GM12878 (cell line): ENCODE measurements at regions of chr11 and their contacts with region 1.

Region 1: DNA sequence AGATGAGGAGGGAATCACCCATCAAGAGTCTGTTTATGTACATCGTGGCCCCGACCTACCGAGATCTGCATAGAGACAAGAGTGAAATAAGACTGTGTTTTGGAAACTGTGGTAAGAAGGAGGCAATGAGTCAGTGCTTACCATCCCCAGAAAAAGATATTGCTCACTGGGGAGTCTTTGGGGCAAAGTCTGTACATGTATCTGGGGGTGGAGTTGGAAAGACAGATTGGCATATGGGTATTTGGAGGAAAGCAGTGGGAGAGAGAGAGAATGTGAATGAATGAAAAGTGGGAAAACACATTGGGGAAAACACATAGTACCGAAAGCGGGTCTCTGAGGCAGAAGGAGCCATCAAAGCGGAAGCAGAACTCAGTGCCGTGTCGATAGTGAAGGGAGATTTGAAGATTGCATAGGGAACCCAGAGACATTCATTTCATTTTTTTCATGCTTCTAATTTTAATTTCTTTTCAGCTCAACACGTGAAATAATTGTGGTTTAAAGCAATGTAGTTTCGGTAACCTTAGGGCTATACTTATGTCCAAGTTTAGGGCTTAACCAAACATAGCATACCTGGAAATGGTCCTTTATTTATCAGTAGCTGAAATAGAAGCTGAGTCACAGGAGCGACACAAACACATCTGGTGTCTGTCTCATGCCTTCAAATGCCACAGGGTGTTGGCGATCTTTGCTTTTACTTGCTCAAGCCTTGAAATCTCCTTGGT is 98.6 kb upstream of the CD44 start:
- DNase-seq: peak; percentile 84
- ATAC-seq: peak; percentile 88
- H3K4me3 ChIP-seq: peak overlapping the region; percentile 6; the same call in 1 of the 2 replicates
- H3K27ac ChIP-seq: peak overlapping the region; percentile 71
- H3K4me1 ChIP-seq: peaks cover 31% of the 10 kb centered on the region
- H3K27me3 ChIP-seq: no peaks in the 10 kb centered on the region
- CTCF ChIP-seq: no peak
- EP300 ChIP-seq: peak; percentile 63 to 93; a peak in 3 of 4 replicates
- POLR2A ChIP-seq: no peak
- RAD21 ChIP-seq: peak; percentile 6; the same call in 1 of the 2 replicates

Region 2: GRCh38 chr11:34997952-34998528 is 42.3 kb before region 1 on chr11:
- CTCF ChIA-PET with region 1: interaction called, 4 read pairs
- POLR2A ChIA-PET with region 1: no interaction called
- RAD21 ChIA-PET with region 1: interaction called, 8 read pairs
- SMC1A ChIA-PET with region 1: interaction called, 10 read pairs
- in situ Hi-C with region 1: no loop called
- intact Hi-C with region 1: no loop called
- DNase-seq: no peak
- ATAC-seq: peak; percentile 74
- H3K4me3 ChIP-seq: no peak overlapping the region
- H3K27ac ChIP-seq: no peak overlapping the region
- H3K4me1 ChIP-seq: peaks cover 8% of the 10 kb centered on the region; the same call in 1 of the 2 replicates
- H3K27me3 ChIP-seq: no peaks in the 10 kb centered on the region
- CTCF ChIP-seq: peak; percentile 24 to 62 (median 41); a peak in 5 of 6 replicates
- EP300 ChIP-seq: no peak
- POLR2A ChIP-seq: no peak
- RAD21 ChIP-seq: peak; percentile 62

Region 3: GRCh38 chr11:35050541-35050995 is 10.2 kb after region 1 on chr11:
- CTCF ChIA-PET with region 1: interaction called, 4 read pairs
- POLR2A ChIA-PET with region 1: no interaction called
- RAD21 ChIA-PET with region 1: interaction called, 7 read pairs
- SMC1A ChIA-PET with region 1: interaction called, 27 read pairs
- in situ Hi-C with region 1: no loop called
- intact Hi-C with region 1: no loop called
- DNase-seq: no peak
- ATAC-seq: peak; percentile 18; the same call in 2 of the 3 replicates
- H3K4me3 ChIP-seq: no peak overlapping the region
- H3K27ac ChIP-seq: peak overlapping the region; percentile 61
- H3K4me1 ChIP-seq: peaks cover 14% of the 10 kb centered on the region
- H3K27me3 ChIP-seq: no peaks in the 10 kb centered on the region
- CTCF ChIP-seq: no peak
- EP300 ChIP-seq: no peak
- POLR2A ChIP-seq: no peak
- RAD21 ChIP-seq: no peak

Region 4: DNA sequence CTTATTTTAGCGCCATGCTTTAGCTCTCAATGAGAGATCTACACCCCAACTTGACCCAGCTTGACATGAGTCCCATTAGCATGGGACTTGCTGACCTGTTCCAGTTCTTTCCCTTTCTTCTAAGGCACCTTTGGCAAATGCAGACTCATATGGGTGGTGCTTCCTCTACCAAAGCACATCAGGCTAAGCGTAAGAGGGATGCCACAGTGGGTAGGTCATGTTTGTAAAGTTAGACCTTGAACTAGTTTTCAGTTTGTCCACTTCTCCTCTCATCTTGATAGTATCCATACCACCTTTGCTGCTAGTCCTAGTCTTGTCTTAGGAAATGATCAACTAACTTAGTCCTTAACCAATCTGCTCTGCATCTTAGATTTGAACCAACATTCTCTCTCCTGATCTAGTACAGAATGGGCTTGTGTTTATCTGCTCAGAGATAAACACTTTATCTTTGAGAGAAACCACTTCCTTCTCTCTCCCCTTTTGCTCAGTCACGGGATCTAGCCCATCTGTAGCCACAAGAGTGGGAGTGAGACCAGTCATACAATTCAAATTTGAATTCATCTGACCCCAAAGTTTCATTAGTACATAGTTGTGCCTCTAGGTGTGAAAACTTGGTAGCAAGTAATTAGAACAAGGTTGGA is 26.5 kb after region 1 on chr11:
- CTCF ChIA-PET with region 1: interaction called, 5 read pairs
- POLR2A ChIA-PET with region 1: interaction called, 4 read pairs
- RAD21 ChIA-PET with region 1: interaction called, 6 read pairs
- SMC1A ChIA-PET with region 1: interaction called, 14 read pairs
- in situ Hi-C with region 1: no loop called
- intact Hi-C with region 1: no loop called
- DNase-seq: no peak
- ATAC-seq: peak; percentile 92
- H3K4me3 ChIP-seq: no peak overlapping the region
- H3K27ac ChIP-seq: no peak overlapping the region
- H3K4me1 ChIP-seq: peaks cover 14% of the 10 kb centered on the region
- H3K27me3 ChIP-seq: no peaks in the 10 kb centered on the region
- CTCF ChIP-seq: no peak
- EP300 ChIP-seq: peak; percentile 74 to 76
- POLR2A ChIP-seq: no peak
- RAD21 ChIP-seq: no peak

Region 5: DNA sequence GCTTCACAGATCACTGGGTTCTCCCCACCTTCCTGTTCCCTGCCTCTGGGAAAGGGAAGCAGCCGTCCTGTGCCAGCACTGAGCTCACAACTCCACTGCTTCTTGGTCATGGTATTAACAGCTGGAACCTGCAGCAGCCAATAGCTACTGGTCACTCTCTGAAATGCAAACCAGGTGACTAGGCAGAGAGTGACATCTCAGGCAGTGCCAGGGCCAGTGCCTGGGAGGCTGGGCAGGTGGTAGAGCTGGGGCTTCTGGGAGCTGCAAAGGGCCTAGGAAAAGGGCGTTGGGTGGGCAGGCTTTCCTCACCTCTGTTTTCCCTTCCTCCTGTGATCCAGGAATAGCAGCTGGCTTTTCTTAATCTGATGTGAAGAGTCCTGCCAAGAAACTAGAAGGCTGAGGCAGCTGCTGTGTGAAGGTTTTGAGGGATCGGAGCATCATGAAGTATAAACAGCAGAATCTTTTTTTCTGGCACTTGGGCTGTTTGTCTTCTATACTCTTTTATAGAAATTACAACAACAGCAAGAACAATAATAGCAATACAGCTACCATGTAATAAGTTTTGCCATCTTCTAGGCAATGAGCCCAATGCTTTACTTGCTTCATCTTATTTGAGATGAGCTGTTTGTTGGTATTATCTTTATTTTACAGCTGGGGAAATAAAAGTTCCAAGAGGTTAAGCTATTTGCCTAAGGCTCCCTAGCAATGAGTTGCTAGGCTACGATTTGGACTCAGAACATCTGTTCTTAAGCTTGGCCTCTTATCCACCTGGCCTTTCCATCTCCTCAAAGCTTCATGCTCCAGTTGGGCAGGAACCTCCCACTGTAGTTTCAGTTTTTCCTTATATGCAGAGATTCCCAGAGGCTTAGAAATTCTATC is 76.6 kb after region 1 on chr11:
- CTCF ChIA-PET with region 1: no interaction called
- POLR2A ChIA-PET with region 1: no interaction called
- RAD21 ChIA-PET with region 1: interaction called, 4 read pairs
- SMC1A ChIA-PET with region 1: interaction called, 6 read pairs
- in situ Hi-C with region 1: no loop called
- intact Hi-C with region 1: loop called (anchors 2 kb)
- DNase-seq: no peak
- ATAC-seq: no peak
- H3K4me3 ChIP-seq: no peak overlapping the region
- H3K27ac ChIP-seq: no peak overlapping the region
- H3K4me1 ChIP-seq: peaks cover 53% of the 10 kb centered on the region
- H3K27me3 ChIP-seq: no peaks in the 10 kb centered on the region
- CTCF ChIP-seq: no peak
- EP300 ChIP-seq: no peak
- POLR2A ChIP-seq: no peak
- RAD21 ChIP-seq: no peak

Region 6: DNA sequence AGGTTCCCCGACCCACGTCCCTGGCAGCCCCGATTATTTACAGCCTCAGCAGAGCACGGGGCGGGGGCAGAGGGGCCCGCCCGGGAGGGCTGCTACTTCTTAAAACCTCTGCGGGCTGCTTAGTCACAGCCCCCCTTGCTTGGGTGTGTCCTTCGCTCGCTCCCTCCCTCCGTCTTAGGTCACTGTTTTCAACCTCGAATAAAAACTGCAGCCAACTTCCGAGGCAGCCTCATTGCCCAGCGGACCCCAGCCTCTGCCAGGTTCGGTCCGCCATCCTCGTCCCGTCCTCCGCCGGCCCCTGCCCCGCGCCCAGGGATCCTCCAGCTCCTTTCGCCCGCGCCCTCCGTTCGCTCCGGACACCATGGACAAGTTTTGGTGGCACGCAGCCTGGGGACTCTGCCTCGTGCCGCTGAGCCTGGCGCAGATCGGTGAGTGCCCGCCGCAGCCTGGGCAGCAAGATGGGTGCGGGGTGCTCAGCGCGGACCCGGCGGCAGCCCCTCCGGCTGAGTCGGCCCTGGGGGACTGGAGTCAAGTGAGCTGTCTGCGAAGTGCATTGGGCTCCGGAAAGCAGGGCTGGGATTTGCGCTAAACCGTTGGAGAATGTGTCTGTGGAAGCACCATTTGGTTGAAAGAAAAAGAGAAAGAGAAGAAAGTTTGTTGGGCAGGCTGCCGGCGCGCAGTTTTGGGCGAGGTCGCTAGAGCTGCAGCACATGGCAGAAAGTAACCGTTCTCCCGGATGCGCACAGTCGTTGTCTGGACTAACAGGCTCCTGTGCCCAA is 98.8 kb after region 1 on chr11 and contains the start of gene CD44:
- CTCF ChIA-PET with region 1: interaction called, 6 read pairs
- POLR2A ChIA-PET with region 1: interaction called, 4 read pairs
- RAD21 ChIA-PET with region 1: interaction called, 8 read pairs
- SMC1A ChIA-PET with region 1: interaction called, 10 read pairs
- in situ Hi-C with region 1: no loop called
- intact Hi-C with region 1: loop called (anchors 1 kb)
- DNase-seq: no peak
- ATAC-seq: peak; percentile 54
- H3K4me3 ChIP-seq: peak within 1 kb of the TSS; percentile 88
- H3K27ac ChIP-seq: peak within 1 kb of the TSS; percentile 68
- H3K4me1 ChIP-seq: peaks cover 34% of the 10 kb centered on the region
- H3K27me3 ChIP-seq: no peaks in the 10 kb centered on the region
- CTCF ChIP-seq: no peak
- EP300 ChIP-seq: no peak
- POLR2A ChIP-seq: peak; percentile 99
- RAD21 ChIP-seq: no peak
- polyA plus RNA-seq, gene CD44: 57.1 to 65.3 TPM